Activated B cell treated with CpG ODN at 0.5 μM for 24 hours (primary cell): ENCODE measurements at regions of chr14 and their contacts with region 1.

Region 1: GRCh38 chr14:89954070-89955028 is at the start of gene EFCAB11:
- DNase-seq: peak; percentile 85
- ATAC-seq: peak; percentile 83
- H3K4me3 Mint-ChIP-seq: peak within 1 kb of the TSS; percentile 99
- H3K27ac Mint-ChIP-seq: peak within 1 kb of the TSS; percentile 95
- H3K4me1 Mint-ChIP-seq: peaks cover 32% of the 10 kb centered on the region
- H3K27me3 Mint-ChIP-seq: no peaks in the 10 kb centered on the region
- CTCF ChIP-seq: no peak
- total RNA-seq, gene EFCAB11: 7.5 and 10.0 TPM in 2 replicates

Region 2: GRCh38 chr14:88385345-88386101 is 1568.8 kb before region 1 on chr14 and contains the start of gene SPATA7:
- CTCF ChIA-PET with region 1: no interaction called
- POLR2A ChIA-PET with region 1: no interaction called
- intact Hi-C with region 1: loop called (anchors 10 kb)
- DNase-seq: peak; percentile 71
- ATAC-seq: peak; percentile 94
- H3K4me3 Mint-ChIP-seq: peak within 1 kb of the TSS; percentile 94
- H3K27ac Mint-ChIP-seq: peak within 1 kb of the TSS; percentile 68
- H3K4me1 Mint-ChIP-seq: peaks cover 15% of the 10 kb centered on the region
- H3K27me3 Mint-ChIP-seq: peaks cover 2% of the 10 kb centered on the region
- CTCF ChIP-seq: no peak
- total RNA-seq, gene SPATA7: 1.4 and 1.6 TPM in 2 replicates

Region 3: GRCh38 chr14:88824314-88825077 is 1129.9 kb before region 1 on chr14 and contains the start of gene TTC8:
- CTCF ChIA-PET with region 1: no interaction called
- POLR2A ChIA-PET with region 1: no interaction called
- intact Hi-C with region 1: loop called (anchors 1 kb)
- DNase-seq: peak; percentile 77
- ATAC-seq: peak; percentile 97
- H3K4me3 Mint-ChIP-seq: peak within 1 kb of the TSS; percentile 88
- H3K27ac Mint-ChIP-seq: peak within 1 kb of the TSS; percentile 100
- H3K4me1 Mint-ChIP-seq: peaks cover 14% of the 10 kb centered on the region
- H3K27me3 Mint-ChIP-seq: peaks cover 11% of the 10 kb centered on the region
- CTCF ChIP-seq: no peak
- total RNA-seq, gene TTC8: 4.8 and 6.0 TPM in 2 replicates

Region 4: GRCh38 chr14:89720741-89721315 is 233.5 kb before region 1 on chr14:
- CTCF ChIA-PET with region 1: no interaction called
- POLR2A ChIA-PET with region 1: interaction called, 4 read pairs
- intact Hi-C with region 1: loop called (anchors 2 kb)
- DNase-seq: peak; percentile 45
- ATAC-seq: peak; percentile 90
- H3K4me3 Mint-ChIP-seq: peak overlapping the region; percentile 69
- H3K27ac Mint-ChIP-seq: peak overlapping the region; percentile 95
- H3K4me1 Mint-ChIP-seq: peaks cover 66% of the 10 kb centered on the region
- H3K27me3 Mint-ChIP-seq: no peaks in the 10 kb centered on the region
- CTCF ChIP-seq: no peak

Region 5: DNA sequence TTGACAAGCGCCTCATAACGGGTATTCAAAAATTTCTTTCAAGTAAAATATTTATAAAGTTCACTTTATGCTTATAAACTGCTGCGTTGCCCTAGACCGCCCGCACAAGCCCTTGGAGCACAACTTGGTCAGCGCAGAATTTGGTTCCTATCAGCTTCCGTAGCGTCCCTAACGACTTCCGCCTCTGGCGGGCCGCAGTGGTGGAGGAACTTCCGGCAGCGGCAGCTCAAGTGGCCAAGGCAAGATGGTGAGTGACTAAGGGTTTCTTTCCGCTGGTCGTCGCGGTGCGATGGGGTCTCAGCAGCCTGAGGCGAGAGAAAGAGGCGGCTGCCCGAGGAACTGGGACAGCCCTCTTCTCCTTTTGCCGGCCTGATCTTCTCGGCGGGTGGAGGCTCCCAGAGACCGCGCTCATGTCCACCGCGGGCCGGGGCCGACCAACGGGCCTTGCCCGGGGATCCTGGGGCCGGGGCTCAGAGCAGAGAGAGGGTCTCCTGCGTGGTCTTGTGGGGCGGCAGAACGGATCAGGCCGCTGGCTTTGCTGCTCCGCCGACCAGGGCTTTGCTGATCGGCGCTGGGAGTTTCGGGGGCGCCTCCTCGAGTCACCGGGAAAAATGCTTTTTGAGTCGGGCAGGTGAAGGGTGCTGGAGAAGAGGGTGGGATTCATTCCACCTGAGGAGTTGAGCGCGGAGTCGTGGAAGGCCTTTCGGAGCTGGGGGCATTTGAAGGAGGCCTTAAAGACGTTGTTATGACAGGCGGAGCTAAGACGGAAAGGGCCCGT is 302.2 kb after region 1 on chr14 and contains the start of gene PSMC1:
- CTCF ChIA-PET with region 1: no interaction called
- POLR2A ChIA-PET with region 1: interaction called, 6 read pairs
- intact Hi-C with region 1: loop called (anchors 1 kb)
- DNase-seq: peak; percentile 76
- ATAC-seq: peak; percentile 94
- H3K4me3 Mint-ChIP-seq: peak within 1 kb of the TSS; percentile 98
- H3K27ac Mint-ChIP-seq: peak within 1 kb of the TSS; percentile 92
- H3K4me1 Mint-ChIP-seq: peaks cover 40% of the 10 kb centered on the region
- H3K27me3 Mint-ChIP-seq: no peaks in the 10 kb centered on the region
- CTCF ChIP-seq: no peak
- total RNA-seq, gene PSMC1: 101 and 102 TPM in 2 replicates

Region 6: GRCh38 chr14:90758028-90758889 is 803.9 kb after region 1 on chr14:
- CTCF ChIA-PET with region 1: no interaction called
- POLR2A ChIA-PET with region 1: interaction called, 3 read pairs
- intact Hi-C with region 1: loop called (anchors 1 kb)
- DNase-seq: peak; percentile 95
- ATAC-seq: peak; percentile 88
- H3K4me3 Mint-ChIP-seq: peak overlapping the region; percentile 79
- H3K27ac Mint-ChIP-seq: peak overlapping the region; percentile 86
- H3K4me1 Mint-ChIP-seq: peaks cover 24% of the 10 kb centered on the region
- H3K27me3 Mint-ChIP-seq: peaks cover 2% of the 10 kb centered on the region
- CTCF ChIP-seq: no peak